Activated T-helper 1 cell treated with anti-CD3 and anti-CD28 coated beads, Interleukin-12 subunit alpha, Interleukin-12 subunit beta, Interleukin-2, Interleukin-4 antibody, amounts not matched to agents 30 ng/mL and 10 ng/mL and 1 ng/mL, durations not matched to agents 14 hours and 24 hours and 36 hours (primary cell): ENCODE measurements at regions of chr13 and their contacts with region 1.

Region 1: DNA sequence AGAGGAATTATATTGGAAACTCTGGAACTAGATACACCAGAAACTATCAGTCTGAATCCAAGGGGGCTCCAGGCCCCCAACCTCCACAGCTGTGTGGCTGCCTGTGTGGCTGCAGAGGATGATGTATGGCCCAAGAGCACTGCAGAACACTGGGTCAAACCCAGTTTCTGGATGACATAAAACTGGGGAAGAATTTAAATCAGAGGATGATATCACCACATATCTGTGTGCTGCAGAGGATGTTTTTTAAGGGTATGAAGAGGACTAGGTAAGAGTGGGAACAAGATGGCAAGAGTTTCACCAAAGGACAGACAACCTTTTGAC is 226.4 kb downstream of the SUCLA2 start:
- DNase-seq: no peak
- H3K4me3 Mint-ChIP-seq: no peak overlapping the region
- H3K27ac Mint-ChIP-seq: no peak overlapping the region
- H3K4me1 Mint-ChIP-seq: no peaks in the 10 kb centered on the region
- H3K27me3 Mint-ChIP-seq: peaks cover 6% of the 10 kb centered on the region

Region 2: DNA sequence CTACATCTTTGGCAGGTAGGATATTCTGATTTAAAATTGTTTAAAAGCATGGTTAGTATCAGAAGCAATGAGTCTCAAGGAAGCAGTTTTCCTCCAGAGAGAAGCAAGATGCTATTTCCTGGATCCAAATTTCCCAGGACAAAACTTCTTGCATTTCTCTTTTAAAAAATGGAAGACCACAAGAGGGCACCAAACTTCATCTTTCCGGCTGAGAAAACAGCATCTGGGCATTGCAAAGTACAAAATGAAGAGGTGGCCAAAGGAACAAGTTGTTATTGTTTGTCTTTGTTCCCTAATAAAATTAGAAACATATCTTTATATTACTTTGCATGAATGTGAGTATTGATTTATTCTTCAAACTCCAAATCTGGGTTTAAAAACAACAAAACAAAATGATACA is 1281.7 kb before region 1 on chr13:
- intact Hi-C with region 1: loop called (anchors 5 kb)
- DNase-seq: no peak
- H3K4me3 Mint-ChIP-seq: no peak overlapping the region
- H3K27ac Mint-ChIP-seq: no peak overlapping the region
- H3K4me1 Mint-ChIP-seq: peaks cover 9% of the 10 kb centered on the region
- H3K27me3 Mint-ChIP-seq: peaks cover 5% of the 10 kb centered on the region

Region 3: DNA sequence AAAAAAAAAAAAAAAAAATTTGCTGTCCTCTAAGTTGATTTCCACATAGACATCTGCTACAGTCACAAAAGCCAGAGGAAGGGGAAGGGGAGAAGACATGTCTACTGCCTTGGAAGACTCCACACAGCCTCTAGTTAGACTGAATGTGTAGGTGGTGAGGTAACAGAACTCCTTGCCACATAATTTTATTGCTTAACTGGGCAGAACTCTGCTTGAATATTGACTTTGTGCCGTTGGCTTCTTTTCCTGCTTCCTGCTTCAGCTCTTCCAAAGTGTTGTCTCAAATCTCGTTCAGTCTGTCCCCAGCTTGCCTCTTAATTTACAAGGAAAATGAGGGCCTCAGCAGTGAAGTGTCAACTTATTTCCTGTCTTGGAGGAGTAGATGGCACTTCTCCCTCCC is 1014.8 kb before region 1 on chr13:
- intact Hi-C with region 1: loop called (anchors 2 kb)
- DNase-seq: no peak
- H3K4me3 Mint-ChIP-seq: no peak overlapping the region
- H3K27ac Mint-ChIP-seq: no peak overlapping the region
- H3K4me1 Mint-ChIP-seq: peaks cover 22% of the 10 kb centered on the region
- H3K27me3 Mint-ChIP-seq: no peaks in the 10 kb centered on the region

Region 4: DNA sequence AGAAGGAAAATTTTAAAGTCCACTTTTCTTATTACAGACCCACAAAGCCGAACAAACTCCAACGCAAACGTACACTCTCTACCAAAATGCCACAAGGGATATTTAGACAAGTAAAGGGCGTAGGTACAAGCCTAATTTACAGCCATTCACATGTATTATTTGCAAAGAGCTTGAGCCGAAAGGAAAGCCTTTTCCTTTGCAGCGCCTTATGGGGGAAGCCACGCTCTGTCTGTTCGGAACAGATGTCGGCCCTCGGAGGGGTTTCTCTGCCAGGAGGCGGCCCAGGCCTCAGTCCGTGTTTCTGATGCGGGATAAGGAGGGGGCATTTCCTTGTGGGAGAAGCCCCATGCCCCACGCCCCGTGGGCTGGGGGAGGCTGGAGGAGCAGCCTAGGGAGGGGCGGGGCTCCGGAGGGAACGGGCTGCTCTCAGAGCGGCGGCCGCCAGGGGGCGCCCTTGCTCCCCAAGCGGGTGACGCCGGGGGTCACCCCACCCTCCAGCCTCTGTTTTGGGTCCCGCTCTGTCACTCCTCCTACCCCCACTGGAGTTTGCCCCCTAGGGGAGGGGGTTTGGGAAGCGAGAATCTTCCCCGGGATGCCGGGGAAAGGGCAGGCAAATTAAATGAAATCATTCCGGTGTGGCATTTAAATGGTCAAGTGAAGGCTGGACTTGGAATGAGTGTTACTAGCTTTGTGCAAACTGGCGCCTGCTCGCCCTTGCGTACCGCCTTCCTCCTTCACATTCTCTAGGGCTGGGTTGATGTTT is 880.7 kb before region 1 on chr13:
- intact Hi-C with region 1: loop called (anchors 10 kb)
- DNase-seq: peak; percentile 49
- H3K4me3 Mint-ChIP-seq: peak overlapping the region; percentile 76
- H3K27ac Mint-ChIP-seq: no peak overlapping the region
- H3K4me1 Mint-ChIP-seq: peaks cover 7% of the 10 kb centered on the region
- H3K27me3 Mint-ChIP-seq: peaks cover 65% of the 10 kb centered on the region